HepG2 (cell line): ENCODE measurements at regions of chr14 and their contacts with region 1.

Region 1: DNA sequence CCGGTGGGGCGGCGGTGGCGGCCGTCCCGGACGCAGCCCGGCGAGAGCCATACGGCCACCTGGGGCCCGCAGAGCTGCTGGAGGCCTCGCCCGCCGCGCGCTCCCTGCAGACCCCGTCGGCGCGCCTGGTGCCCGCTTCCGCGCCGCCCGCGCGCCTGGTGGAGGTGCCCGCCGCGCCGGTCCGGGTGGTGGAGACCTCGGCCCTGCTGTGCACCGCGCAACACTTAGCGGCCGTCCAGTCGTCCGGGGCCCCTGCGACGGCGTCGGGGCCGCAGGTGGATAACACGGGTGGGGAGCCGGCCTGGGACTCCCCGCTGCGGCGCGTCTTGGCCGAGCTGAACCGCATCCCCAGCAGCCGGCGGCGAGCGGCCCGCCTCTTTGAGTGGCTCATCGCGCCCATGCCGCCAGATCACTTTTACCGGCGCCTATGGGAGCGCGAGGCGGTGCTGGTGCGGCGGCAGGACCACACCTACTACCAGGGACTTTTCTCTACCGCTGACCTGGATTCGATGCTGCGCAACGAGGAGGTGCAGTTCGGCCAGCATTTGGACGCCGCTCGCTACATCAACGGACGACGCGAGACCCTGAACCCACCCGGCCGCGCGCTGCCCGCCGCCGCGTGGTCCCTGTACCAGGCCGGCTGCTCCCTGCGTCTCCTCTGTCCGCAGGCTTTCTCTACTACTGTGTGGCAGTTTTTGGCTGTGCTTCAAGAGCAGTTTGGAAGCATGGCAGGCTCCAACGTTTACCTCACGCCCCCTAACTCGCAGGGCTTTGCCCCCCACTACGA is 716 bp downstream of the RIOX1 start:
- DNase-seq: peak; percentile 54
- ATAC-seq: peak; percentile 88
- H3K4me3 ChIP-seq: peak overlapping the region; percentile 58 to 84 (median 70)
- H3K27ac ChIP-seq: peak overlapping the region; percentile 85
- H3K4me1 ChIP-seq: peaks cover 39% of the 10 kb centered on the region
- H3K27me3 ChIP-seq: no peaks in the 10 kb centered on the region
- CTCF ChIP-seq: no peak
- EP300 ChIP-seq: no peak
- POLR2A ChIP-seq: peak in 1 of 2 experiments; percentile 31; a peak in 2 of 4 replicates
- RAD21 ChIP-seq: peak; percentile 31

Region 2: GRCh38 chr14:73477618-73478266 is 13.7 kb before region 1 on chr14:
- CTCF ChIA-PET with region 1: no interaction called
- POLR2A ChIA-PET with region 1: interaction called, 20 read pairs
- in situ Hi-C with region 1: no loop called
- intact Hi-C with region 1: no loop called
- DNase-seq: no peak
- ATAC-seq: no peak
- H3K4me3 ChIP-seq: no peak overlapping the region
- H3K27ac ChIP-seq: peak overlapping the region; percentile 66
- H3K4me1 ChIP-seq: peaks cover 24% of the 10 kb centered on the region
- H3K27me3 ChIP-seq: no peaks in the 10 kb centered on the region
- CTCF ChIP-seq: no peak
- EP300 ChIP-seq: no peak
- POLR2A ChIP-seq: no peak
- RAD21 ChIP-seq: no peak

Region 3: GRCh38 chr14:73503648-73504047 is 12.2 kb after region 1 on chr14:
- CTCF ChIA-PET with region 1: no interaction called
- POLR2A ChIA-PET with region 1: interaction called, 12 read pairs
- in situ Hi-C with region 1: no loop called
- intact Hi-C with region 1: no loop called
- DNase-seq: no peak
- ATAC-seq: no peak
- H3K4me3 ChIP-seq: no peak overlapping the region
- H3K27ac ChIP-seq: no peak overlapping the region
- H3K4me1 ChIP-seq: 0 out of 2 replicates have a peak, but pooled peaks cover 6% of the 10 kb centered on the region
- H3K27me3 ChIP-seq: no peaks in the 10 kb centered on the region
- CTCF ChIP-seq: no peak
- EP300 ChIP-seq: no peak
- POLR2A ChIP-seq: no peak
- RAD21 ChIP-seq: no peak

Region 4: GRCh38 chr14:73526569-73526968 is 35.1 kb after region 1 on chr14:
- CTCF ChIA-PET with region 1: no interaction called
- POLR2A ChIA-PET with region 1: no interaction called
- in situ Hi-C with region 1: no loop called
- intact Hi-C with region 1: no loop called
- DNase-seq: peak; percentile 57
- ATAC-seq: peak; percentile 87
- H3K4me3 ChIP-seq: no peak overlapping the region
- H3K27ac ChIP-seq: no peak overlapping the region
- H3K4me1 ChIP-seq: peaks cover 18% of the 10 kb centered on the region
- H3K27me3 ChIP-seq: no peaks in the 10 kb centered on the region
- CTCF ChIP-seq: no peak
- EP300 ChIP-seq: no peak
- POLR2A ChIP-seq: no peak
- RAD21 ChIP-seq: no peak